ENCODE measurements at regions of chr9 and their contacts with region 1.

Region 1: DNA sequence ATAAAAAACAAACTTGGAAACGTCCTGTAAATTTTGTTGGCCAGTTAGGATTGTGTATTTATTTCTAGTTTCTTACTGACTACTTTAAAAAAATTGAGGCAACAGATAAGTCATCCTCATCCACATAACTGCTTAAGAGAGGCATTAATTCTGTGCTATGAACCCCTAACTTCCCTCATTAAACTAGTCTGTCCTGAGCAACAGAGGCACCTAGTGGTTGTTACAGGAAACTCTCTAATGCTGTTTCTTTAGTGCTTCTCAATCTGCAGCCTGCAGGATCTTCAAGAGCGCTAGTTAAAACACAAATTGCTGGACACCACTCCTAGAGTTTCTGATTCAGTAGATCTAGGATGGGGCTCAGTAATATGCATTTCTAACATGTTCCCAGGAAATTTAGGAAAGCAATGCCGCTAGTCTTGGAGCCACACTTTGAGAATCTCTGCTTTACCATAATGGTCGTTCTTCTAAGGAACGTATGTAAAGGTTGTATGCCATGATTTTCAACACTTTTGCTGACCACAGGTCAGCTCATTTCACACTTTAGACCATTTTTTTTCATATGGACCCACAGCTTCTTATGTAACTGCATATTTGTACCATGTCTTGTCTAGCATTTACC is 410.1 kb upstream of the SMARCA2 start:
- DNase-seq: no peak
- H3K4me3 Mint-ChIP-seq: no peak overlapping the region
- H3K27ac Mint-ChIP-seq: no peak overlapping the region
- H3K4me1 Mint-ChIP-seq: no peaks in the 10 kb centered on the region
- H3K27me3 Mint-ChIP-seq: peaks cover 6% of the 10 kb centered on the region

Region 2: GRCh38 chr9:1460143-1460769 is 144.8 kb before region 1 on chr9:
- CTCF ChIA-PET with region 1: interaction called, 8 read pairs
- POLR2A ChIA-PET with region 1: no interaction called
- intact Hi-C with region 1: loop called (anchors 1 kb)
- DNase-seq: peak; percentile 16
- H3K4me3 Mint-ChIP-seq: no peak overlapping the region
- H3K27ac Mint-ChIP-seq: no peak overlapping the region
- H3K4me1 Mint-ChIP-seq: peaks cover 4% of the 10 kb centered on the region
- H3K27me3 Mint-ChIP-seq: peaks cover 2% of the 10 kb centered on the region

Measured in activated CD4-positive, alpha-beta memory T cell treated with anti-CD3 and anti-CD28 coated beads for 36 hours (primary cell).